ENCODE measurements at regions of chr12 and their contacts with region 1.

Region 1: GRCh38 chr12:14257734-14258574 is 107.5 kb upstream of the ATF7IP start:
- DNase-seq: peak; percentile 98
- ATAC-seq: peak; percentile 73
- H3K4me3 Mint-ChIP-seq: peak overlapping the region; percentile 39
- H3K27ac Mint-ChIP-seq: peak overlapping the region; percentile 100
- H3K4me1 Mint-ChIP-seq: peaks cover 75% of the 10 kb centered on the region
- H3K27me3 Mint-ChIP-seq: no peaks in the 10 kb centered on the region; the same call in 1 of the 2 replicates
- CTCF ChIP-seq: no peak

Region 2: DNA sequence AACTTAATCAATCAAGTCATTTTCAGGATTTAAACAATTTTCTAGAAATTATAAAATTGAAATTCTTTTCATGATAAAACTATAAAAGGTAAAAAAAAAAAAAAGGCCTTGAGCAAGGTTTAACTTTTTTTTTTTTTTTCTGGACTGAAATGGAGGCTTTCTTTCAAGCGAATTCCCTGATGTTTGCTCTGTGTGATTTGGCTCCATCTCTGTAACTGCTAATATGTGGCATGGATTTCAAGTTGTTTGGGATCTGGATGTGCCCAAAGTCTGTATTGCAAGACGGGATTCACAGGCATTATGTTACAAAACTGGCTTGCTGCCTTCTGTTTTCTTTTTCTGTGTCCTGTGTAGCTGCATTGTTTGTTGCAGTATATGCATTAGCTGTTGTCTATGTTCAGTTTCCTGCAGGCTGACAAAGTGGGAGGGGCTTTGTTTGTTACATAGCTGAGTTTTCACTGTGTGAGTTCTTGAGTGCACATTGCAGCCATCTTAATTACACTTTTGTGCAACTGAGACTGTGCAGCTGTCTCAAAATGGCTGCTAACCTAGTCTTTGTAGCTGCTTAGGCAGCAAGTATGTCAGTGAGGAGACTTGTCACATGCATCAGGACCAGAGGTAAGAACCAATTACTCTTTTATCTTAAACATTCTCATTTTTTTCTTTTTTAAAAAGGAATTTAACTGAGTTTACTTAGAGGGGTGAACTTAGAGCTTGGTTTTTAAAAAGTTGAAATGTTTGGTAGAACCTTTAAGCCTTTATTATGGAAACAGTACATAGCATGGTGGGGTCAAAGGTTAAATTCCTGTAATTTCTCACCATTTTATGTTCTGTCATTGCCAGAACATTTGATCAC is 127.1 kb after region 1 on chr12:
- CTCF ChIA-PET with region 1: interaction called, 3 read pairs
- POLR2A ChIA-PET with region 1: interaction called, 18 read pairs
- DNase-seq: peak; percentile 28
- ATAC-seq: peak; percentile 83
- H3K4me3 Mint-ChIP-seq: peak overlapping the region; percentile 50
- H3K27ac Mint-ChIP-seq: peak overlapping the region; percentile 97
- H3K4me1 Mint-ChIP-seq: peaks cover 76% of the 10 kb centered on the region
- H3K27me3 Mint-ChIP-seq: no peaks in the 10 kb centered on the region
- CTCF ChIP-seq: no peak

Region 3: GRCh38 chr12:14394317-14395073 is 136.5 kb after region 1 on chr12:
- CTCF ChIA-PET with region 1: interaction called, 3 read pairs
- POLR2A ChIA-PET with region 1: interaction called, 16 read pairs
- DNase-seq: no peak
- ATAC-seq: peak; percentile 94
- H3K4me3 Mint-ChIP-seq: peak overlapping the region; percentile 42
- H3K27ac Mint-ChIP-seq: peak overlapping the region; percentile 97
- H3K4me1 Mint-ChIP-seq: peaks cover 84% of the 10 kb centered on the region
- H3K27me3 Mint-ChIP-seq: no peaks in the 10 kb centered on the region
- CTCF ChIP-seq: no peak

Region 4: GRCh38 chr12:14454098-14454907 is 196.3 kb after region 1 on chr12:
- CTCF ChIA-PET with region 1: interaction called, 19 read pairs
- POLR2A ChIA-PET with region 1: interaction called, 5 read pairs
- DNase-seq: peak; percentile 56
- ATAC-seq: peak; percentile 99
- H3K4me3 Mint-ChIP-seq: no peak overlapping the region
- H3K27ac Mint-ChIP-seq: peak overlapping the region; percentile 86
- H3K4me1 Mint-ChIP-seq: peaks cover 49% of the 10 kb centered on the region
- H3K27me3 Mint-ChIP-seq: no peaks in the 10 kb centered on the region
- CTCF ChIP-seq: peak; percentile 72